ENCODE measurements at regions of chr18 and their contacts with region 1.

Region 1: DNA sequence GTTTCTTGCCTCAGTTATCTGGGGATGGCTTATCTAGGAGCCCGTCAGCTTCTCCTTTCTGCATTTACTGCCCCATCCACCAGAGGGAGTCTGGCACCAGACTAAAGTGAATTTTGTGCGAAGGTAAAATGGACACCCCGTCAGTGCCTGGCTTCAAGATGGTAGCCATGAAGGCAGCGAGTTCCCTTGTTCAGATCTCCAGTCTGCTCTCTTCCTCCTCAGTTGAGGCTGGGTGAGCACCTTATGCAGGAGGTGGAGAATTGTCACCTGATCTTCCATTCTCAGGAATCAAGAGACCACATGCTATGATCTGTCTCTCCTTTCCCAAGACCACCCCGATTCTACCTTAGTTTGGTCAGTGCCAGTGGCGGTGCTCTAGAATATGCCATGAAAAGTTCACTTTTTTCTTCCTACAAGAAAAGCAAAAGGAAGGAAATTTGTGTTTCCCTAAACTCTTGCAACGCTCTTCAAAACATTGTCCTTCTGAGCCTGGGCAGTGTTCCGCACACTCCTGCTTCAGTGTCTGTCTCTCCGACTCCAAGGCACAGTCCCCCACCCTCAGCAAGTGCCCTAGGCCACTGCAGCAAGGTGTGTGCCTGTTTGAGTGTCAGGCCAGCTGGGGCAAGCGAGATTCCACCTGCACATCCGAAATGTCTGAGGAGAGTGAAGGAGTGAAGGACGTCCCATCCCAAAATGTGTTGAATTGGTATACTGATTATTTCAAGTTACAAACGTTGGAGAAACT is 168.6 kb downstream of the SS18 start:
- DNase-seq: peak; percentile 60
- ATAC-seq: peak; percentile 65
- H3K4me3 ChIP-seq: no peak overlapping the region
- H3K27ac ChIP-seq: no peak overlapping the region
- H3K4me1 ChIP-seq: no peaks in the 10 kb centered on the region
- H3K27me3 ChIP-seq: peaks cover 49% of the 10 kb centered on the region
- CTCF ChIP-seq: peak; percentile 75

Region 2: DNA sequence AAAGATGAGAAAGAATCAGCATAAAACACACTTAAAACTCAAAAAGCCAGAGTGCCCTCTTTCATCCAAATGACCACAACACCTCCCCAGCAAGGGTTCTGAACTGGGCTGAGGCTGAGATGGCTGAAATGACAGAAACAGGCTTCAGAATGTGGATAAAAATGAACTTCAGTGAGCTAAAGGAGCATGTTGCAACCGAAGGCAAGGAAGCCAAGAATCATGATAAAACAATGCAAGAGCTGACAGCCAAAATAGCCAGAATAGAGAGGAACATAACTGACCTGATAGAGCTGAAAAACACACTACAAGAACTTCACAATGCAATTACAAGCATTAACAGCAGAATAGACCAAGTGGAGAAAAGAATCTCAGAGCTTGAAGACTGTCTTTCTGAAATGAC is 199.6 kb after region 1 on chr18:
- CTCF ChIA-PET with region 1: interaction called, 4 read pairs
- POLR2A ChIA-PET with region 1: no interaction called
- intact Hi-C with region 1: loop called (anchors 1 kb)
- DNase-seq: no peak
- ATAC-seq: no peak
- H3K4me3 ChIP-seq: no peak overlapping the region
- H3K27ac ChIP-seq: no peak overlapping the region
- H3K4me1 ChIP-seq: no peaks in the 10 kb centered on the region
- H3K27me3 ChIP-seq: peaks cover 62% of the 10 kb centered on the region
- CTCF ChIP-seq: no peak

Measured in PC-3 (cell line).